Breast epithelium (tissue), 4 donors: ENCODE measurements at regions of chr6 and their contacts with region 1.

Region 1: GRCh38 chr6:112665815-112666214 is 318.7 kb downstream of the RFPL4B start:
- DNase-seq: no peak
- H3K4me3 ChIP-seq: no peak overlapping the region
- H3K27ac ChIP-seq: no peak overlapping the region
- H3K4me1 ChIP-seq: no peaks in the 10 kb centered on the region
- H3K27me3 ChIP-seq: no peaks in the 10 kb centered on the region
- CTCF ChIP-seq: no peak
- POLR2A ChIP-seq: no peak

Region 2: GRCh38 chr6:112735129-112735528 is 69.3 kb after region 1 on chr6:
- intact Hi-C with region 1: no loop called
- DNase-seq: no peak
- H3K4me3 ChIP-seq: no peak overlapping the region
- H3K27ac ChIP-seq: no peak overlapping the region
- H3K4me1 ChIP-seq: no peaks in the 10 kb centered on the region
- H3K27me3 ChIP-seq: no peaks in the 10 kb centered on the region
- CTCF ChIP-seq: no peak
- POLR2A ChIP-seq: no peak

Region 3: GRCh38 chr6:113927001-113927400 is 1261.2 kb after region 1 on chr6:
- intact Hi-C with region 1: loop called (anchors 5 kb)
- DNase-seq: no peak
- H3K4me3 ChIP-seq: no peak overlapping the region
- H3K27ac ChIP-seq: no peak overlapping the region
- H3K4me1 ChIP-seq: no peaks in the 10 kb centered on the region
- H3K27me3 ChIP-seq: no peaks in the 10 kb centered on the region
- CTCF ChIP-seq: no peak
- POLR2A ChIP-seq: no peak